ENCODE measurements at regions of chr16 and their contacts with region 1.

Region 1: DNA sequence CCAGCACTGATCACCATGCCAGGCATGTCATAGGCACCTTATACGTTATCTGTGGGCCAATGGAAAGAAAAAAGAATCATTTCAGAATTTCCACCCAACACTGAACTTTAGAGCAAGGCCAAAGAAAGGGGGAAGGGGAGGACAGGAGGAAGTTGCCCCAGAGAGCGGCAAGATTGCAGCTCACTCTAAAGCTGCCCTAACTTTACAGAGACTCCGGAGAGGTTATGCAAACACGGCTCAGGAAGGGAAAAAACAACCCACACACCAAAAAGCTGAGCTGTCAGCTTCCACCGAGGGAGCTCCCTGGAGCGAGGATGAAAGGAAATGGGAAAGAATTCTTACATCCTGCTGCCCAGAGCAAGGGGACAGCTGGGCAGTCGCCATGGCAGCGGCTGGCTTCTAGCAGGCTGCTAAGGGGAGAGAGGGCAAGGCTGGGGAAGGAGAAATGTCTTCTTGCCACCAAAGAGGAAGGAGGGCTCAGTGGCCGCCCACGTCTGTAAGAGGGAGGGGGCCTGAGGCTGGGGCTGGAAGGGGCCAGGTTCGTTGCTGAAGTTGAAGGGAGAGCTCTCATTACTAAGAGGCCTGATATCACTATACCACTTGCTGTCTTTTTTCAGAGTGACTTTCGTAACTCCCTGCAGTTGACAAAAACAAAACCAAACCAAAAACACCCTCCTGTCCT is 18.2 kb downstream of the COTL1 start:
- DNase-seq: peak; percentile 90
- H3K4me3 Mint-ChIP-seq: peak overlapping the region; percentile 72
- H3K27ac Mint-ChIP-seq: peak overlapping the region; percentile 96
- H3K4me1 Mint-ChIP-seq: peaks cover 88% of the 10 kb centered on the region
- H3K27me3 Mint-ChIP-seq: no peaks in the 10 kb centered on the region

Region 2: DNA sequence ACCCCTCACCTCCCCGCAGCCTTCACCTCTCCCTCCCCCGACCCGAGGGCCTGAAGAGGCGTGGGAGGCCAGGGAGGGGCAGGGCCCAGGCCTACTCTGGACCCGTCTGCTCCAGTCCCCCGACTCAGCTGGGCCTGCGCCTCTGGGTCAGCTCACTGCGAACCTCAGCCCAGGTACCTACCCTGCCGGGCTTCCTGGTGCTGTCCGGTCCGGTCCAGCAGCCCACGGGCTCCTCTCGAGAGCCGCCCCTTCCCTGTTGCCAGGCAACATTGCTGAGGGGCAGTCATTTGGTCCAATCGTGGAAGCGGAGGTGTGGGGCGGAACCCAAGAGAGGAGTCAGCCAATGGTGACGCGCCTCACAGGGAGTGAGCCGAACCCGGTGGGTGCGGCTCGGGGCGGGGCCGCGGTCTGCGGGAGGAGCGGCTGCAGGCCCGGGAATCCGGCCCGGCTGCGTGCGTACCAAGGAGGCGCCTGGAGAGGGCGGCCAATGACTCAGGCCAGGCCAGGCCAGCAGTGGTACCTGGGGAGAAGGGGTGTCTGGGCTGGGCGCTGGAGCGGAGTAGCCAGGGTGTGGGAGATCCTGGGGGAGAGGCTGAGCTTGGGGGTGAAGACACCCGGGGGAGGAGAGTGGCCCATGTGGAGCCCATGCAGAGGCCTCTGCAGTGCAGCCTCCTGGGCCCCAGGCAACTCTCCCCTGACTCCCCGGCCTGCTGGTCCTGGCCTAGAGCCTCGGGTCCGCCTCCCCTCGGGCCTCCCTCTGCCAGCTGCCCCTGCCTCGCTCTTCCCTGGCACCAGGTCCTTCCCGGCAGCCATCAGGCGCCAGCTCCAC is 95.0 kb before region 1 on chr16 and contains the start of gene MEAK7:
- CTCF ChIA-PET with region 1: interaction called, 24 read pairs
- POLR2A ChIA-PET with region 1: interaction called, 8 read pairs
- intact Hi-C with region 1: no loop called
- DNase-seq: peak; percentile 99
- H3K4me3 Mint-ChIP-seq: peak within 1 kb of the TSS; percentile 86
- H3K27ac Mint-ChIP-seq: peak within 1 kb of the TSS; percentile 87
- H3K4me1 Mint-ChIP-seq: peaks cover 51% of the 10 kb centered on the region
- H3K27me3 Mint-ChIP-seq: no peaks in the 10 kb centered on the region
- total RNA-seq, gene MEAK7: 12.9 to 13.6 TPM

Region 3: GRCh38 chr16:84511180-84511824 is 88.4 kb before region 1 on chr16:
- CTCF ChIA-PET with region 1: interaction called, 24 read pairs
- POLR2A ChIA-PET with region 1: interaction called, 15 read pairs
- intact Hi-C with region 1: loop called (anchors 1 kb)
- DNase-seq: peak; percentile 82
- H3K4me3 Mint-ChIP-seq: no peak overlapping the region
- H3K27ac Mint-ChIP-seq: peak overlapping the region; percentile 44
- H3K4me1 Mint-ChIP-seq: peaks cover 67% of the 10 kb centered on the region
- H3K27me3 Mint-ChIP-seq: no peaks in the 10 kb centered on the region

Region 4: DNA sequence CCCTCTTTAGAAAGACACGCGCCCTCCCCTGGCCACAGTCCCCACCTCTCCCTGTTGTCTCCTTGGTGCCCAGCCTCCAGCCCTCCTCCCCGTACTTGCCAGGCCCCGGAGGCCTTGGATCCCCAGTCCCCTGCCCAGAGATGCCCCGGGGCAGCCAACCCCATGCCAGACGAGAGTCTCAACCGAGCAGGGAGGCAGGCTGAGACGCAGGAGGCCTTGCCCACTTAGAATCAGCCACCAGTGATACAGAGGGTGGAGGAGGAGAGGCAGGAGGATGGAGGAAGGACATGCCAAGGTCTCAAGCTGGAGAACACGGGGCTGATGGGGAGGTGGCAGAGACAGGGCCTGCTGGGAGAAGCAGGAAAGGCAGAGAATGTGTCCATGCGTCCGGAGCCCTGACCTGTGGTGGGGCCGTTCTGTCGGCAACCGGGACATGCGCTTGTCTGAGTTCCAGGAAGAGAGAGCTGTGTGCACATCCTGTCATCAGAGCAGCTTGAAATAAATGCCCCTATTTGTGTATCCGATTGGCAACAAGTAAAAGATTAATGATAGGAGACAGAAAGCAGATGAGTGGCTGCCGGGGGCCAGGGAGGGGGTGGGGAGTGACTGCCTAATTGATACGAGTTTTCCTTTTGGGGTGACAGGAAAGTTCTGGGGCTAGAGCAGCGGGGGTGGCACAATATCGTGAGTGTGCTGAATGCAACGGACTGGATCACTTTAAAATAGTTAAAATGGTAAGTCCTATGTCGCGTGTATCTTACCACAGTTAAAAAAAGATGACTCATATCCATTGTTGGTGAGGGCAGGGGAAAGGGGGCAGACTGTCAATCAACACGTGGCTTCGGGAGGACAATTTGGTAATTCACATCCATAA is 50.5 kb before region 1 on chr16:
- CTCF ChIA-PET with region 1: interaction called, 9 read pairs
- POLR2A ChIA-PET with region 1: interaction called, 25 read pairs
- intact Hi-C with region 1: loop called (anchors 1 kb)
- DNase-seq: peak; percentile 68
- H3K4me3 Mint-ChIP-seq: peak overlapping the region; percentile 86
- H3K27ac Mint-ChIP-seq: peak overlapping the region; percentile 98
- H3K4me1 Mint-ChIP-seq: peaks cover 65% of the 10 kb centered on the region
- H3K27me3 Mint-ChIP-seq: no peaks in the 10 kb centered on the region

Region 5: DNA sequence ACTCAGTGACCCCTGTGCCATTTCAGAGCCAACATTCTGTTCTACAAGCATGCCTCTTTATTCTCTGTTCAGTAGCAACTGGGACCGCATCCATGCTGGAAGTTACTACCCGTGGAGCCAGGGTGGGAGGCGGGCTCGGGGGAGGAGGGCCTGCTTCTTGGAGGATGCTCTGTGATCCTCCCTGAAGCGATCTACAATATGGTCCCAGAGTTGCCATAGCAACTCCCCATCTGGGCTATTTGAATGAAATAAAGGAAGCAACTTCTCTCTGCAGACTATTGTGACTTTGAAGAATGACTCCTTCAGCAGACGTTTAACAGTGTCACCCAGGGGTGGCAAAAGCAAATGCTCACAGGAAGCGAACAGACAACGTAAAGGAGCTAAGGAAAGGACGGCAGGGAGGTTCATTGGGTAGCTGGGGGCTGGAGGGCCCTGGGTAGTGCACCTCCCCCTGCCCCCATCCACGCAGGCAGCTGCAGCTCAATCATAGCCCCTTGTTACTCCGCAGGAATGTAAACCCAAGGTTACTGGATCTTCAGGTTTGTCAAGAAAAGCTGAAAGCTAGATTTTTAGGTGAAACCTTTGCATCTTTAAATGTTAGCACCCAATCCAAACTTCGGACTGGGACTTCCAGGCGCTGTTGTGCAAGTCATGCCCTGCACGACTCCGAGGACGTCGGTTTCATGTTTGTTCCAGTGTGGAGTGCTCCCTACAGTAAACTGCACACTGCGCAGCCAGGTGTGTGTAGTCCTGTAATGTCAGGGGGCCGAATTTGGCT is 44.1 kb before region 1 on chr16:
- CTCF ChIA-PET with region 1: interaction called, 9 read pairs
- POLR2A ChIA-PET with region 1: interaction called, 25 read pairs
- intact Hi-C with region 1: loop called (anchors 1 kb)
- DNase-seq: no peak
- H3K4me3 Mint-ChIP-seq: no peak overlapping the region
- H3K27ac Mint-ChIP-seq: peak overlapping the region; percentile 10
- H3K4me1 Mint-ChIP-seq: peaks cover 38% of the 10 kb centered on the region
- H3K27me3 Mint-ChIP-seq: no peaks in the 10 kb centered on the region

Region 6: GRCh38 chr16:84694980-84695379 is 95.3 kb after region 1 on chr16:
- CTCF ChIA-PET with region 1: no interaction called
- POLR2A ChIA-PET with region 1: no interaction called
- intact Hi-C with region 1: no loop called
- DNase-seq: no peak
- H3K4me3 Mint-ChIP-seq: no peak overlapping the region
- H3K27ac Mint-ChIP-seq: no peak overlapping the region
- H3K4me1 Mint-ChIP-seq: peaks cover 4% of the 10 kb centered on the region
- H3K27me3 Mint-ChIP-seq: no peaks in the 10 kb centered on the region

Measured in activated CD4-positive, alpha-beta memory T cell treated with anti-CD3 and anti-CD28 coated beads for 36 hours (primary cell).